ENCODE measurements at regions of chr17 and their contacts with region 1.

Region 1: DNA sequence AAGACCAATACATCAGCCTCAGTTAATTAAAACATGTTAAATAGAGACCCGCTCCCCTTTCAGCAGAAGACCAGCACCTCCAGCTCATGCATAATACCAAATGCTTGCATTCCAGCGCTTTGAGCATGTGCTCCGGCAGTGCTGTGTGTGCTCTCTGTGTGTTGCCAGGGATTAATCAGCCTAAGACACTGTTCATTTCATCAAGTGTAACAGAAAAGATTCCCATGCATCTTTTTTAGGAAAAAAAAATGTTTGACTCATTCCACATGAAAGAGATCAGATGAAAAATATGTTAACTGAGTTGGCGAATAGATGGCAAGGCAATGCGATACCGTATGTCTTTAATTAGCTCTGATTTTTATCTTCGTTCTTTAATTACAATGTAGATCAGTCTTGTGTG is 187.6 kb downstream of the RPTOR start:
- DNase-seq: no peak
- H3K4me3 Mint-ChIP-seq: no peak overlapping the region
- H3K27ac Mint-ChIP-seq: no peak overlapping the region
- H3K4me1 Mint-ChIP-seq: peaks cover 55% of the 10 kb centered on the region
- H3K27me3 Mint-ChIP-seq: no peaks in the 10 kb centered on the region

Region 2: GRCh38 chr17:80673152-80673920 is 58.9 kb before region 1 on chr17:
- intact Hi-C with region 1: loop called (anchors 5 kb)
- DNase-seq: peak; percentile 81
- H3K4me3 Mint-ChIP-seq: peak overlapping the region; percentile 58
- H3K27ac Mint-ChIP-seq: peak overlapping the region; percentile 72
- H3K4me1 Mint-ChIP-seq: peaks cover 77% of the 10 kb centered on the region
- H3K27me3 Mint-ChIP-seq: no peaks in the 10 kb centered on the region

Region 3: GRCh38 chr17:80720610-80721577 is 11.4 kb before region 1 on chr17:
- intact Hi-C with region 1: no loop called
- DNase-seq: peak; percentile 89
- H3K4me3 Mint-ChIP-seq: peak overlapping the region; percentile 68
- H3K27ac Mint-ChIP-seq: peak overlapping the region; percentile 90
- H3K4me1 Mint-ChIP-seq: peaks cover 64% of the 10 kb centered on the region
- H3K27me3 Mint-ChIP-seq: no peaks in the 10 kb centered on the region

Region 4: DNA sequence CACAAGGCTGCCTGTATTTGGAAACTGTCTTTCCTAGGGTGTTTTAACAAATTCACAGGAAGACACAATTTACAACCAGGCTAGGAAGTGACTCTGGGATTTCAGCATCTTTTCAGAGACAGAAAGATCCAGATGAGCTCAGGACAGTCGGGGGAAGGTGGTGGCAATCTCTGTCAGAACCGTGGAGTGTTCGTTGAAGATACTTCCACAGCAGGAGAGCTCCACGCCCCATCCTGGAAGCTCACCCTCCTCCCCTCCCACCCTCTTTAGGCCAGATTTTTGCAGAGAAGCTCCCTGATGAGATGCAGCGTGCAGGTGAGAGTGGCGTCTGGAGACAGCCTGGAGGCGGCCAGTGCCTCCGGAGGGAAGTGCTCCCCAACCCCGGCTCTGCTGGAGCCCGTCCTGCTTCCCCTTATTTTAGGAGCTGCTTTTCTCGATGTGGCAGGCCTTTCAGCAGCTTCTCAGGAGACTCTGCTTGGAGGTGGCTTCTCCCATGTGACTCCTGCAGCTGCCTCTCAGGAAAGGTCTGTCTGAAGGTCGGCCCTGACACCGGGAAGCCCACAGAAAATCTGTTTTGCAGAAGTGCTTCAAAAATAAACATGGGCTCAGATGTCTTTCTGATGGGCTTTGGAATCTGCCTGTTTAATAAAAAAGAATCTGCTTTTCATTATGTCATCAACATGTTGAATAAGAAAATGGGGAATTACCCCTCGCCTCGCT is 72.9 kb after region 1 on chr17:
- intact Hi-C with region 1: no loop called
- DNase-seq: no peak
- H3K4me3 Mint-ChIP-seq: no peak overlapping the region
- H3K27ac Mint-ChIP-seq: peak overlapping the region; percentile 25
- H3K4me1 Mint-ChIP-seq: peaks cover 13% of the 10 kb centered on the region
- H3K27me3 Mint-ChIP-seq: no peaks in the 10 kb centered on the region

Measured in activated CD4-positive, alpha-beta T cell treated with anti-CD3 and anti-CD28 coated beads, Interleukin-2, amount 10 ng/mL, durations not matched to agents 24 days and 14 days (primary cell).